Body of pancreas (tissue), 4 donors: ENCODE measurements at regions of chr5 and their contacts with region 1.

Region 1: DNA sequence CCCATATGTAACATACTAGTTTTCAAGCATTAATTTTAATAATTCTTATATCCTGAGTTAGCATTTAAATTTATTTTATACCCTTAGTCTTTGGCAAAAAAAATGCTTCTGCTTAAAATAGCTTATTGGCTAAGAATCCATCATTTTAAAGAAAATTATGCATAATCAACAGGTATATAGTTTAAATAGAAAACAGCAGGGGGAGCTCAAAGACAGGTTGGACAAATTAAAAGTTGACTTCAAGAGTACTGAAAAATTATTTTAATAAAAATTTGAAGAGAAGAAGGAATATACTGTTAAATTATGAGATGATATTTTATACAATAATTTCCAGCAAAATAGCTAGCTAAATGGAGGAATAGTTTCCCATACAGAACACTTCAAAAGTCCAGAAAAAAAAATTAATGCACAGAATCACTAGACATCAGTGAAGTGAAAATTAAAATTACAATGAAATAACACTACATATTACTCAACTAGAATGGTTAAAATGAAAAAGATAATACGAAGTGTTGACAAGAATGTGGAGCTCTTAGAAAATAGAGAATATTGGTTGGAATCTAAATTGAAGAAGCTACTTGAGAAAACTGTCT is 387.1 kb downstream of the PDE4D start:
- DNase-seq: no peak
- ATAC-seq: no peak
- H3K4me3 ChIP-seq: no peak overlapping the region
- H3K27ac ChIP-seq: no peak overlapping the region
- H3K4me1 ChIP-seq: no peaks in the 10 kb centered on the region
- H3K27me3 ChIP-seq: no peaks in the 10 kb centered on the region
- CTCF ChIP-seq: peak; percentile 17 to 79 (median 71)
- POLR2A ChIP-seq: no peak

Region 2: GRCh38 chr5:59401637-59402036 is 104.7 kb before region 1 on chr5:
- intact Hi-C with region 1: no loop called
- DNase-seq: no peak
- ATAC-seq: no peak
- H3K4me3 ChIP-seq: no peak overlapping the region
- H3K27ac ChIP-seq: no peak overlapping the region
- H3K4me1 ChIP-seq: no peaks in the 10 kb centered on the region
- H3K27me3 ChIP-seq: no peaks in the 10 kb centered on the region
- CTCF ChIP-seq: no peak
- POLR2A ChIP-seq: no peak

Region 3: DNA sequence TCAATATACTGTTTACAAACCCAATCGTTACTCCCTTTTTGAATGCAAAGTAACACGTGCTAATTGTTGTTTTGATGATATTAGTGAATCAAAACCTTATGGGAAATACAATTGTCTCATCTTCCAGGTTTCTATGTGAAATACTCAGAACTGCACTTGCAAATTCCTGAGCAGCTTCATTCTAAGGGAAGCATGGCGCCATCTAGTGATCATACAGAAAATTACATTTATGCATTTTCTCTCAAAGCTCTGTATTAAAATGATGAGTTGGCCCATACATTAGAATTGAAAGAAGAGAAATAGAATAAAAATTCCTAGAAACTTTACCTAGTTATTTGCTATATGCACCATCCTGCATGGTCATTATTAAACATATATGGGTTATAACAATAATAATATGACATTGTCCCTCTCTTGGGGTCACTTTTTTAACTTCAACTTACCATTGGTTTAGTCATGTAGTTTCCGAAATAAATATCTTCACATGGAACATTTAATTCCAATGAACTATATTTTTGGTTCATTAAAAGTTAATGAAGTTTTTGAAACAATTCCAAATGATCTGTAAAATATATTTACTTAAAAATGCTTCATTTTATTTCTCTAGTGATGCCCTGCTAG is 167.2 kb after region 1 on chr5:
- intact Hi-C with region 1: loop called (anchors 5 kb)
- DNase-seq: no peak
- ATAC-seq: peak; percentile 55
- H3K4me3 ChIP-seq: no peak overlapping the region
- H3K27ac ChIP-seq: no peak overlapping the region
- H3K4me1 ChIP-seq: no peaks in the 10 kb centered on the region
- H3K27me3 ChIP-seq: no peaks in the 10 kb centered on the region
- CTCF ChIP-seq: peak; percentile 68 to 90 (median 82)
- POLR2A ChIP-seq: no peak